Activated naive CD4-positive, alpha-beta T cell treated with anti-CD3 and anti-CD28 coated beads for 36 hours (primary cell): ENCODE measurements at regions of chr12 and their contacts with region 1.

Region 1: GRCh38 chr12:54379401-54380201 is 4.9 kb downstream of the ZNF385A start:
- DNase-seq: peak; percentile 96
- H3K4me3 Mint-ChIP-seq: peak overlapping the region; percentile 53
- H3K27ac Mint-ChIP-seq: no peak overlapping the region
- H3K4me1 Mint-ChIP-seq: peaks cover 14% of the 10 kb centered on the region
- H3K27me3 Mint-ChIP-seq: no peaks in the 10 kb centered on the region

Region 2: DNA sequence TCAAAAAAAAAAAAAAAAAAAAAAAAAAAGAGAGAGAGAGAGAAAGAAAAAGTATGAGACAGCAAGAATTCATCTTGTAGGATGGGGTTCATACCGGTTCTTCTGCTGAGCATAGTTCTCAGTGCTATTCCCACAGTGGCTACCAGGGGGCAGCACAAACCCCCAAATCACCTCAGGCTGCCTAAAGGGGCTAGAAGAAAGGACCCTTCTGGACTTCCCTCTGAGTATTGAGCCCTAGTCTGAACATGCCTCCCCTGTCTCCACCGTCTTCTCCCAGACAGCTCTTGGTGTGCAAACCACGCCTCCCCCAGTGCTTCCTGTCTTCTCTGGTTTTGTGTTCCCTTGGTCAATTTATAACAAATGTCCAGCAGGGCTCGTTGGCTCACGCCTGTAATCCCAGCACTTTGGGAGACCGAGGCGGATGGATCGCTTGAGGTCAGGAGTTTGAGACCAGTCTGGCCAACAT is 159.5 kb before region 1 on chr12:
- CTCF ChIA-PET with region 1: interaction called, 31 read pairs
- intact Hi-C with region 1: loop called (anchors 1 kb)
- DNase-seq: peak; percentile 84
- H3K4me3 Mint-ChIP-seq: no peak overlapping the region
- H3K27ac Mint-ChIP-seq: no peak overlapping the region
- H3K4me1 Mint-ChIP-seq: peaks cover 19% of the 10 kb centered on the region
- H3K27me3 Mint-ChIP-seq: peaks cover 4% of the 10 kb centered on the region

Region 3: GRCh38 chr12:54337280-54337842 is 42.2 kb before region 1 on chr12:
- CTCF ChIA-PET with region 1: interaction called, 45 read pairs
- intact Hi-C with region 1: loop called (anchors 1 kb)
- DNase-seq: no peak
- H3K4me3 Mint-ChIP-seq: no peak overlapping the region
- H3K27ac Mint-ChIP-seq: no peak overlapping the region
- H3K4me1 Mint-ChIP-seq: peaks cover 22% of the 10 kb centered on the region
- H3K27me3 Mint-ChIP-seq: no peaks in the 10 kb centered on the region

Region 4: DNA sequence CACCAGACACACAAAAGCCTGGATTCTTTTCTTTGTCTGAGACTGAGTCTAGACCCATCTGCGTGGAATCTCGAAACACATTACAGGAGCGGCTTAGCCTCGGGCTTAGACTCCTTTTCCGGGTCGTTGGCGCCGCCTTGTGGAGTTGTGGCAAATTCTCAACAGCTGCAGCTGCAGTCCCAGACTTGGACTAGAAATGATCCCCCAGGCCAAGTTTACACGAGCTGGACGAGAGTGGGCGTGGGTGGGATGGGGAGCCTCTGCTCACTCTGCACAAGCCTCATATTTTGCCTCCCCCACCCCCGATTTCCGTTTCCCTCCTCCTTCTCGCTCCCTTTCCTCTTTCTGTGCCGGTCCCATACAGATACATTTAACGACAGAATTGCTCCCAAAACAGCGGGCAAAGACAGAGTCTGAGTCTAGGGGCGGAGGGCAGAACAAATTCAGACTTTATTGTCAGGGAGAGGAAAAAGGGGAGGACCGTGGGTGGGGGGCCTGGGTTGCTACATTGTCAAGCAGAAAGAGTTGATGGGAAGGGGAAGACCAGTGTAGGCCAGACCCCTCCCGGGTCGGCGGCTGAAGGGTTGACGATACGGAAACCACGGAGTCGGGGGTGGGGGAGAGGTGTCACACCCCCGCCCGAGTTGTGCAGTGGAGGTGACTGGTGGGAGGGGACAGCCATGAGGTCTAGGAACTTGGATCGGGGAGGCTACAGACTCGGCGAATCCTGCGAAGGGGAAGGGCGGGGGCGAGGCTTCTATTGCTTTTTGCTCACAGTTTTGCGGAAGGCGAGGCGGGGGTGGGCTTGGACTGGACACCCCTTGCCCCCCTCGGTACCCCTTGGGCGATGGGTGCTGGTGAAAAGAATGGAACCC is 10.7 kb before region 1 on chr12:
- CTCF ChIA-PET with region 1: interaction called, 19 read pairs
- intact Hi-C with region 1: loop called (anchors 1 kb)
- DNase-seq: peak; percentile 97
- H3K4me3 Mint-ChIP-seq: peak overlapping the region; percentile 23
- H3K27ac Mint-ChIP-seq: no peak overlapping the region
- H3K4me1 Mint-ChIP-seq: peaks cover 41% of the 10 kb centered on the region
- H3K27me3 Mint-ChIP-seq: no peaks in the 10 kb centered on the region

Region 5: DNA sequence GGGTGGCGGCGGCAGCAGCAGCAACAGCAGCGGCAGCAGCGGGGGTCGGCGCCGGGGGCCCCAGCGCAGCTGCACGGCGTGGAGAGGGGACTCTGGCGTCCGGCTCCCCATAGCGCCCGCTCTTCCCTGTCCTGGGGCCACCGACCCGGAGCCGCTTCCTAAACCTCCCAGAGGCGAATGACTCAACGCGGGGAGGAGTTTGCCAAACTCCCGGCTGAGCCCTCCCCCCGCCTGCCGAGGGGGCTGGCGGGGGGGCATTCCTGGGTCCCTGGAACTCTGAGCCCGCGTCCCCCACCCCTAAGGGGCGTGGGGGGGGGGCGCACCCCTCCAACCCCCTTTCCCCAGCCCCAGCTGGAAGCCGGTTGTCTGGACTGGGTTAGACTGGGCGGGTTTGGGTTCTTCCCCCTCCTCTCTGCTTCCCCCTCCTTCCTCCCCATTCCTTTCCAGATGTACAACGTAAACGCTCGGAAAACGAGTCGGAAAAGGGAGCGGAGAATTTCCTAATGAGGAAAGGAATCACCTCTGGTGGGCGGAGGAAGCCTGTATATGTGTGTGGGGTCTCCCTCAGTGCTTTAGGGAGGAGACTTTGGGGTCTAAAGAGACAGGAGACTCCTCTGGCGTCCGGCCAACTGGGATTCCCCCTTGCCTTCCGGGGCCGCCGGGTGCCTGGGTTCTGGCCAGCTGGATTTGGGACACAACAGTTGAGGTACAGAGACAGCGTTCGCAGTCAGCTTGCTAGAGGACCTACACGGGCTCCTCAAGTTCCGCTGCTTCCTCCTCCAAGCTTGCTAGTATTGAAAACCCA is 39.7 kb after region 1 on chr12 and contains the start of gene ITGA5:
- CTCF ChIA-PET with region 1: interaction called, 10 read pairs
- intact Hi-C with region 1: no loop called
- DNase-seq: peak; percentile 59
- H3K4me3 Mint-ChIP-seq: peak within 1 kb of the TSS; percentile 95
- H3K27ac Mint-ChIP-seq: peak within 1 kb of the TSS; percentile 89
- H3K4me1 Mint-ChIP-seq: peaks cover 52% of the 10 kb centered on the region
- H3K27me3 Mint-ChIP-seq: no peaks in the 10 kb centered on the region
- total RNA-seq, gene ITGA5: 17.9 to 18.4 TPM